Activated CD4-positive, alpha-beta T cell treated with anti-CD3 and anti-CD28 coated beads for 36 hours (primary cell): ENCODE measurements at regions of chr16 and their contacts with region 1.

Region 1: GRCh38 chr16:10971560-10971961 is 27.2 kb downstream of the CLEC16A start:
- DNase-seq: peak; percentile 47
- ATAC-seq: peak; percentile 40
- H3K4me3 Mint-ChIP-seq: no peak overlapping the region
- H3K27ac Mint-ChIP-seq: peak overlapping the region; percentile 21
- H3K4me1 Mint-ChIP-seq: peaks cover 35% of the 10 kb centered on the region
- H3K27me3 Mint-ChIP-seq: no peaks in the 10 kb centered on the region

Region 2: GRCh38 chr16:10981697-10982216 is 10.2 kb after region 1 on chr16:
- CTCF ChIA-PET with region 1: interaction called, 14 read pairs
- POLR2A ChIA-PET with region 1: no interaction called
- intact Hi-C with region 1: no loop called
- DNase-seq: peak; percentile 76
- ATAC-seq: peak; percentile 79
- H3K4me3 Mint-ChIP-seq: peak overlapping the region; percentile 38
- H3K27ac Mint-ChIP-seq: peak overlapping the region; percentile 3
- H3K4me1 Mint-ChIP-seq: peaks cover 41% of the 10 kb centered on the region
- H3K27me3 Mint-ChIP-seq: no peaks in the 10 kb centered on the region

Region 3: DNA sequence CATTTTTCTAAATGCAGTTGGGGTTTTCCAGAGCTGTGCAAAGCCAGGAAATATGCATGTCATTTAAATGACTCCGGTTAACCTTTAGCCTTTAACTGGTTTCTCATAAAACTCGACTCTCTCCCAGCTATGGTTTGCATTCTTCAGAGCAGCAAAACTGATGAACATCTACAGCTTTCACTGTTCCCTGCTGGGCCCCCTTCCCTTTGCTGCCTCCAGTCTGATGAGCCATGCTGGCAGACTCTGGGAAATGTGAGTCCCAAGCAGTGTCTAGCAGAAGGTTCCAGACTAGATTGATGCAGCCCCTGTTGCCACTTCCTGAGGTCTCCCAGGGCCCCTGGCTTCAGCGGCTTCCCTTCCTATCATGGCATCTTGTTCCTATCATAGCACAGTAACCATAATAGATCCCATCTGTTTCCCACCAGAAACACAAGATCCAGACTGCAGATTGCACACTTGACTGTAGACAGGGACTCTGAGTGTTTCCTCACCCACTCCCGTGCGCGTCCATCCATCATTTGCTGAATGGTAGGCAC is 108.2 kb after region 1 on chr16:
- CTCF ChIA-PET with region 1: no interaction called
- POLR2A ChIA-PET with region 1: no interaction called
- intact Hi-C with region 1: no loop called
- DNase-seq: peak; percentile 66
- ATAC-seq: peak; percentile 44
- H3K4me3 Mint-ChIP-seq: peak overlapping the region; percentile 36
- H3K27ac Mint-ChIP-seq: peak overlapping the region; percentile 89
- H3K4me1 Mint-ChIP-seq: peaks cover 94% of the 10 kb centered on the region
- H3K27me3 Mint-ChIP-seq: no peaks in the 10 kb centered on the region